Activated CD4-positive, alpha-beta memory T cell treated with anti-CD3 and anti-CD28 coated beads for 36 hours (primary cell): ENCODE measurements at regions of chr6 and their contacts with region 1.

Region 1: GRCh38 chr6:11575408-11576033 is 38.0 kb downstream of the TMEM170B start:
- DNase-seq: peak; percentile 63
- H3K4me3 Mint-ChIP-seq: no peak overlapping the region
- H3K27ac Mint-ChIP-seq: no peak overlapping the region
- H3K4me1 Mint-ChIP-seq: no peaks in the 10 kb centered on the region
- H3K27me3 Mint-ChIP-seq: no peaks in the 10 kb centered on the region

Region 2: GRCh38 chr6:10954590-10955010 is 620.9 kb before region 1 on chr6:
- CTCF ChIA-PET with region 1: interaction called, 5 read pairs
- POLR2A ChIA-PET with region 1: no interaction called
- intact Hi-C with region 1: loop called (anchors 2 kb)
- DNase-seq: peak; percentile 83
- H3K4me3 Mint-ChIP-seq: no peak overlapping the region
- H3K27ac Mint-ChIP-seq: no peak overlapping the region
- H3K4me1 Mint-ChIP-seq: no peaks in the 10 kb centered on the region
- H3K27me3 Mint-ChIP-seq: peaks cover 12% of the 10 kb centered on the region

Region 3: GRCh38 chr6:11514672-11515071 is 60.8 kb before region 1 on chr6:
- CTCF ChIA-PET with region 1: no interaction called
- POLR2A ChIA-PET with region 1: no interaction called
- intact Hi-C with region 1: loop called (anchors 5 kb)
- DNase-seq: no peak
- H3K4me3 Mint-ChIP-seq: no peak overlapping the region
- H3K27ac Mint-ChIP-seq: no peak overlapping the region
- H3K4me1 Mint-ChIP-seq: peaks cover 2% of the 10 kb centered on the region
- H3K27me3 Mint-ChIP-seq: peaks cover 21% of the 10 kb centered on the region

Region 4: DNA sequence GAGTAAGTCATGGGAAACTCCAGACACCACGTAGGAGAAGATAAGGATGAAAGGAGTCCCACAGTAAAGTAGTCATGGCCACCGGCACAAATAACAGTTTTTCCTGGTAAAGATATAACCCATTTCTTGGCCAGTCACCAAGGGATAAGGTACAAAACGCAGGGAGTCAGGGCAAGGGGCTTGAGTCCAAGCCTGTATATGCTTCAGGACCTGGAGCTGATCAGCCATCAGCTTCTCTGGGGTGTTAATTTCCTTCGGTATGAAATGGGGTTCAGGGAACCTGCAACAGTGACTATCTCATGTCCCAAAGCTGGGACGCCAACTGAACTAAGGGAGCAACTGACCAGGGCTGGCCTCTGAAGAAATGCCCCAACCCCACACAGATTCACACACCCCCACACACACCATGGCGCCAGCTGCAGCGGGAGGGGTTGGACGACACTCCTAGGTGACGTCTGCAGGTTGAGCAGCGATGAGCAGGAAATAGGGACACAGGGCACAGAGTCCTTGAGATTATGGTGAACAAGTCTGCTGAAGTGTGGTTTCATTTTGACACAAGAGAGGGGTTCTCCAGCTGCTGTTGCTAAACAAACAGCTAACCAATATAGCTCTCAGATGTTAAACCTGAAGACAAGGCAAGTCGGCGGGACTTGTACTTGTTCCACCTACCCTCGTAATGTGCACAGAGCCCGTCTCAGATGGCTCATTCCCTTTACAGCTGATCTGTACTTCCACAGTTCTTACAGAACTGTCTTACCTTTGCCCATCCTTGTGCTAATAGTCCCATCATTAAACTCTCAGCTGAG is 210.5 kb after region 1 on chr6:
- CTCF ChIA-PET with region 1: no interaction called
- POLR2A ChIA-PET with region 1: no interaction called
- intact Hi-C with region 1: no loop called
- DNase-seq: peak; percentile 80
- H3K4me3 Mint-ChIP-seq: peak overlapping the region; percentile 70
- H3K27ac Mint-ChIP-seq: peak overlapping the region; percentile 75
- H3K4me1 Mint-ChIP-seq: peaks cover 10% of the 10 kb centered on the region
- H3K27me3 Mint-ChIP-seq: peaks cover 10% of the 10 kb centered on the region